Breast epithelium (tissue), 4 donors: ENCODE measurements at regions of chr6 and their contacts with region 1.

Region 1: DNA sequence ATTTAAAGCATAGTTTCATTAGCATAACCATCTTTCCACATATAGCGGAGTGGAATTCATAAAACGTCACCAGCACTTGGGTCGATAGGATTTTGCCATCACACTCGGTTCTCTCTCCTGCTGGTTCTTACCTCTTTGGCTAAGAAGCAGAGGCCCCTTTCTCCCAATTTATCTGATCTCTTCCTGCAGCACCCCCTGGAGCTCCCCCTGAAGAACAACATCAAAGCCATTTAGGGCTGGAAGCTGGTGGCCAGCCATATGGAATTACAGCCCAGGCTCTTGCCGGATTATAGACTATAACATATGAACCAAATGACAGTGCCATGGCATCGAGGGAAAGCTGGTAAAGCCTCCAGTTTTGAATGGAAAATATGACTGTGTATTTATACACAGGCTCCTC is 6.4 kb upstream of the KIF6 start:
- DNase-seq: no peak
- H3K4me3 ChIP-seq: no peak overlapping the region
- H3K27ac ChIP-seq: no peak overlapping the region
- H3K4me1 ChIP-seq: no peaks in the 10 kb centered on the region
- H3K27me3 ChIP-seq: no peaks in the 10 kb centered on the region
- CTCF ChIP-seq: no peak
- POLR2A ChIP-seq: no peak

Region 2: DNA sequence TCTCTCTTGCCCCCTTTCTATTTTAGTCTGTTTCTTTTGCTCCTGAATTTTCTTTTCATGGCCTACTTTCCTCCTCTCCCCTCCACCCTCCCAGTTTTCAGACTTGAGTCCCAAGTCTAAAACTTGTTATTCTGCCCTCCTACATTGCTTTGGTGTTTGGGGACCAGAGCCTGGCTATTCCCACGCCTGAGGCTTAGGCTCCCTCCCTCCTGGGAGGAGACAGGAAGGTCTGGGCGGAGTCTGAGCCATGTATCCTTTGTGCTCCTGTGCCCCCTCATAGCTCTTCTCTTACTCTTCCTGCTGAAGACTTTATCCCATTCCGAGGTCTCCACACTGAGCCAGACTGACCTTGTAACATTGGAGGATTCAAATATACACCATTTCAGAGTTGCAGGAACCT is 130.1 kb after region 1 on chr6:
- intact Hi-C with region 1: loop called (anchors 5 kb)
- DNase-seq: no peak
- H3K4me3 ChIP-seq: no peak overlapping the region
- H3K27ac ChIP-seq: no peak overlapping the region
- H3K4me1 ChIP-seq: no peaks in the 10 kb centered on the region
- H3K27me3 ChIP-seq: no peaks in the 10 kb centered on the region
- CTCF ChIP-seq: no peak
- POLR2A ChIP-seq: no peak